Gastrocnemius medialis (tissue), 4 donors: ENCODE measurements at regions of chr1 and their contacts with region 1.

Region 1: GRCh38 chr1:156892190-156893047 is 1.1 kb upstream of the PEAR1 start:
- DNase-seq: peak; percentile 70 to 76
- ATAC-seq: peak; percentile 70 to 78
- H3K4me3 ChIP-seq: peak overlapping the region; percentile 59 to 65 (median 62)
- H3K27ac ChIP-seq: peak overlapping the region; percentile 86 to 94 (median 90)
- H3K4me1 ChIP-seq: peaks cover 11 to 12% of the 10 kb centered on the region in 2 donors
- H3K27me3 ChIP-seq: peaks cover 6 to 19% (median 17%) of the 10 kb centered on the region in 3 donors
- CTCF ChIP-seq: peak; percentile 58 to 89 (median 71)
- POLR2A ChIP-seq: no peak

Region 2: DNA sequence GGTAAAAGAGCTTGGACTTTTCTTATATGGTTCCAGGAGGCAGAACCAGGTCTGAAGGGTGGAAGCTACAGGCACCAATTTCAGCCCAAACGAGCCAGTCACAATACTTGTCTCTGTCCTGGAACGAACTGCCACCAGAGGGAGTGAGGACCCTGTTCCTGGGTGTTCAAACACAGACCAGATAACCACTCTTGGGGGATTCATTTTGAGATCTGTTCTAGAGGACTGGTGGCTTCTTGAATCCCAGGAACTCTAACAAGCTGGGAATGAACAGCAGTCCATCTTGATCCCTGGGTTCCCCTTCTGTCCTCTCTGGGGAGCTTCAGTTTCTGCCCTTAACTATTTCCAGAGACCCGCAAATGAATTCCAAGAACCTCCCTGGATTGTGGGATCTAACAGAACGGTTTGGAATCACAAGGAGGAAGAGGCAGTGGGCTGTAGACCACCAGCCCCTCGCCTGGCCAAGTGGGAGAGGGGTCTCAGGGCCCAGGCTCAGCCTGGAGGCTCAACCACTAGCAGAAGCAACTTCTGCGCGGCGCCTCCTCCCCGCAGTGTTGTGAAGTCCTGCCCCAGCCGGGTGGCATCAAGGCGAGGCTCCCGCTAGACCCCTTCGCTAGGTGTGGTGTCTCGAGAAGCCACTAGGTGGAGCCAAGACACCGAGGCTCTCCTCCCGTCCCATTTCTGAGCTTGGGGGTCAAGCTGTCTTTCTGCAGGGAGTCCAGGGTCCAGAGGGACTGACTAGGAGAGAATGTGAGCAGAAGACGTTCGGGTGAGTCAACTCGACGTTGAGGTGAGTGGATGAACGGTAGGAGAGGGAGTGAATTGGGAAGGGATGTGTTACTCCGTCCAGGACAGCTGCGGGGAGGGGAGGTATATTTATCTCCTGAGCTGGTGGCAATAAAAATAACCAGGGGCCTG is 203.1 kb before region 1 on chr1:
- in situ Hi-C with region 1: loop called in 1 of 4 experiments (anchors 25 kb)
- intact Hi-C with region 1: no loop called
- DNase-seq: peak; percentile 38 to 72
- ATAC-seq: peak; percentile 83 to 88
- H3K4me3 ChIP-seq: peak overlapping the region; percentile 20 to 36 (median 32)
- H3K27ac ChIP-seq: peak overlapping the region in 3 of 4 donors; percentile 29 to 64 (median 64)
- H3K4me1 ChIP-seq: peaks cover 9 to 13% of the 10 kb centered on the region in 2 donors
- H3K27me3 ChIP-seq: peaks cover 0 to 2% (median 0%) of the 10 kb centered on the region in 3 donors
- CTCF ChIP-seq: peak; percentile 92 to 95 (median 93)
- POLR2A ChIP-seq: no peak

Region 3: DNA sequence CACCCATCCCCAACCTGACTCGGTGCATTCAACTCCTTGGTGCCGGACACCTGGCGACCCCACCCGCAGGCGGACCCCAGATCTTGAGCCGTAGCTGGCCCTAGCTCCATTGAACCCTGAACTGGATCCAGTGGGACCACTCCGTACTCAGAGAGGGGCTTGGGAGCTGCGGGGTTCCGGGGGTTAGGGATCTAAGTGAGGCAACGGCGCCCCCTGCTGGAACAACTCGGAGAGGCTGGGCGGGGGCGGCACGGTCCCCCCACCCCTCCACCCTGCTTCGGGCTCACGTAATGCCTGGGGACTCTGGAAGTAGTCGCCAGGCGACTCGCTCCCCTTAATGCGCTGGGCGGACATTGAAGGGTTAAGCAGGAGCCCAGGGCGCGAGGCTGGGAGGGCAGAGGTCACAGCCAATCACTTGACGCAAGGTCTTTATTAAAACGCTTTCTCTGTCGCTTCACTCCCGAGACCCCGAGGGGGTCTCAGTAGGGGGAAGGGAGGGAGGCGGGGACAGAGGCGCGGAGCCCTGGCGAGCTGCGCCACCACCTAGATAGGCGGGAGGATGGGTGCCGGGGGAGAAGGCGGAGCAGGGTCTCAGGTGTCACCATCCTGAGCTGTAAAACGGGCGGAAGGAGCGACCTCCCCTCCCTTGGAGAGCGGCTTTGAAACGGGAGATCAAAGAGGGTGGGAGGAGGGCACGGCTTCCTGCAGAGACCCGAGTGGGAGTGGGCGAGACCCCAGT is 186.3 kb before region 1 on chr1:
- in situ Hi-C with region 1: loop called in 1 of 4 experiments (anchors 10 kb)
- intact Hi-C with region 1: no loop called
- DNase-seq: peak in 1 of 2 donors; percentile 36
- ATAC-seq: peak; percentile 33 to 49
- H3K4me3 ChIP-seq: peak overlapping the region; percentile 37 to 69 (median 50)
- H3K27ac ChIP-seq: peak overlapping the region; percentile 60 to 69 (median 65)
- H3K4me1 ChIP-seq: peaks cover 28% of the 10 kb centered on the region in 2 donors
- H3K27me3 ChIP-seq: peaks cover 38 to 43% (median 40%) of the 10 kb centered on the region in 3 donors
- CTCF ChIP-seq: peak; percentile 66 to 90 (median 87)
- POLR2A ChIP-seq: no peak

Region 4: GRCh38 chr1:156838981-156839410 is 53.4 kb before region 1 on chr1:
- in situ Hi-C with region 1: no loop called
- intact Hi-C with region 1: loop called (anchors 5 kb)
- DNase-seq: no peak
- ATAC-seq: peak in 1 of 2 donors; percentile 55
- H3K4me3 ChIP-seq: no peak overlapping the region
- H3K27ac ChIP-seq: no peak overlapping the region
- H3K4me1 ChIP-seq: no peaks in the 10 kb centered on the region
- H3K27me3 ChIP-seq: peaks cover 2 to 21% (median 9%) of the 10 kb centered on the region in 3 donors
- CTCF ChIP-seq: peak; percentile 67 to 91 (median 85)
- POLR2A ChIP-seq: no peak

Region 5: GRCh38 chr1:156849151-156849496 is 43.3 kb before region 1 on chr1:
- in situ Hi-C with region 1: no loop called
- intact Hi-C with region 1: no loop called
- DNase-seq: no peak
- ATAC-seq: no peak
- H3K4me3 ChIP-seq: no peak overlapping the region
- H3K27ac ChIP-seq: no peak overlapping the region
- H3K4me1 ChIP-seq: peaks cover 0 to 17% of the 10 kb centered on the region in 2 donors
- H3K27me3 ChIP-seq: peaks cover 13 to 29% (median 13%) of the 10 kb centered on the region in 3 donors
- CTCF ChIP-seq: no peak
- POLR2A ChIP-seq: no peak

Region 6: GRCh38 chr1:156920233-156921052 is 28.0 kb after region 1 on chr1 and contains the start of gene LRRC71:
- in situ Hi-C with region 1: no loop called
- intact Hi-C with region 1: loop called (anchors 1 kb)
- DNase-seq: peak; percentile 20 to 53
- ATAC-seq: peak; percentile 79 to 84
- H3K4me3 ChIP-seq: peak within 1 kb of the TSS; percentile 12 to 32 (median 26)
- H3K27ac ChIP-seq: no peak within 1 kb of the TSS
- H3K4me1 ChIP-seq: peaks cover 0 to 11% of the 10 kb centered on the region in 2 donors
- H3K27me3 ChIP-seq: peaks cover 50 to 70% (median 53%) of the 10 kb centered on the region in 3 donors
- CTCF ChIP-seq: peak; percentile 66 to 86 (median 81)
- POLR2A ChIP-seq: no peak
- total RNA-seq, gene LRRC71: not detected